Ascending aorta (tissue), 2 donors: ENCODE measurements at regions of chr10 and their contacts with region 1.

Region 1: DNA sequence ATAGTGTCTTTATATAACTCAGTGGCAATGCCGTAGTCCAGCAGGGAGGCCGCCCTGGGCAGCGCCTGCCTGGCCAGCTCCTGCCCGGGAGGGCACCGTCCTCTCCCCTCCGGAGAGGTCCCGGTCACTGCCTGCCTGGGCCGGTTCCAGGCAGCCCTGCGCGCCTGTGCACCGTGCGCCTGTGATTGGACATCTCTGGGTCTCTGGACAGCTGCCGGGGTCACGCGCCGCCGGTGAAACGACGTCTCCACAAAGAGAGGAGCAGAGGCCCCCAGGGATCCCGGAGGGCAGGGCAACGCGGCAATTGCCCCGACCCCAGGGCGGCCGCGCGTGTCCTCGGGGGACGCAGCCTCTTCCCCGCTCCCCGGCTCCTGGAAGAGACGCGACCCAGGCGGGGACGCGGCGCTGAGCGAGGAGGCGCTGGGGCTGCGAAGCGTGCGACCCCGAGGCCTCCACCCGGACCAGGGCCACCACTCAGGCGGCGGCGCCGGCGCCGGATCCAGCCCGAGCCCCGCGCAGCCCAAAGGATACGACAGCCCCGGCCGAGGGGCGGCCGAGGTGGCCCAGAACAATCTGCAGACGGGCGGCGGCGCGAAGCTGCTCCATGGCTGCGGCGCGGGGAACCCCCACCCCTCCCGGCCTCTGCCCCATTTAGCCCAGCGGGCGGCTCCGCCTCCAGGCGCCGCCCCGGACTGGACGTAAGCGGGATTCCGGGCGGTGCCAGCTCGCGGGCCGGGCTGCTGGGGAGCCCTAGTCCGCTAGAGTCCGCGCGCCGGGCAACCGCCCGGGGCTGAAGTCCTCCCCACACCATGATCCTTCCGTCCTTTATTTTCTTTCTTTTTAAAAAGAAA is at the start of gene PHYH:
- DNase-seq: peak; percentile 75 to 95
- H3K4me3 ChIP-seq: peak within 1 kb of the TSS; percentile 77 to 86
- H3K27ac ChIP-seq: peak within 1 kb of the TSS; percentile 99
- H3K4me1 ChIP-seq: peaks cover 11 to 20% of the 10 kb centered on the region in 2 donors
- H3K27me3 ChIP-seq: no peaks in the 10 kb centered on the region
- CTCF ChIP-seq: no peak
- total RNA-seq, gene PHYH: 22.0 TPM

Region 2: GRCh38 chr10:12042797-12043651 is 1256.6 kb before region 1 on chr10 and contains the start of gene UPF2:
- intact Hi-C with region 1: loop called (anchors 2 kb)
- DNase-seq: peak; percentile 95 to 99
- H3K4me3 ChIP-seq: peak within 1 kb of the TSS; percentile 91 to 95
- H3K27ac ChIP-seq: peak within 1 kb of the TSS; percentile 91 to 93
- H3K4me1 ChIP-seq: peaks cover 0 to 2% of the 10 kb centered on the region in 2 donors
- H3K27me3 ChIP-seq: no peaks in the 10 kb centered on the region
- CTCF ChIP-seq: no peak
- total RNA-seq, gene UPF2: 7.9 TPM

Region 3: GRCh38 chr10:13146383-13146782 is 153.3 kb before region 1 on chr10:
- intact Hi-C with region 1: no loop called
- DNase-seq: no peak
- H3K4me3 ChIP-seq: no peak overlapping the region
- H3K27ac ChIP-seq: no peak overlapping the region
- H3K4me1 ChIP-seq: no peaks in the 10 kb centered on the region
- H3K27me3 ChIP-seq: no peaks in the 10 kb centered on the region
- CTCF ChIP-seq: no peak

Region 4: GRCh38 chr10:13160934-13161856 is 138.5 kb before region 1 on chr10 and contains the start of gene MCM10:
- intact Hi-C with region 1: loop called (anchors 1 kb)
- DNase-seq: peak; percentile 92 to 99
- H3K4me3 ChIP-seq: peak within 1 kb of the TSS; percentile 29 to 68
- H3K27ac ChIP-seq: no peak within 1 kb of the TSS
- H3K4me1 ChIP-seq: peaks cover 4 to 10% of the 10 kb centered on the region in 2 donors
- H3K27me3 ChIP-seq: no peaks in the 10 kb centered on the region
- CTCF ChIP-seq: peak; percentile 73 to 90 (median 85)
- total RNA-seq, gene MCM10: 0.11 TPM

Region 5: DNA sequence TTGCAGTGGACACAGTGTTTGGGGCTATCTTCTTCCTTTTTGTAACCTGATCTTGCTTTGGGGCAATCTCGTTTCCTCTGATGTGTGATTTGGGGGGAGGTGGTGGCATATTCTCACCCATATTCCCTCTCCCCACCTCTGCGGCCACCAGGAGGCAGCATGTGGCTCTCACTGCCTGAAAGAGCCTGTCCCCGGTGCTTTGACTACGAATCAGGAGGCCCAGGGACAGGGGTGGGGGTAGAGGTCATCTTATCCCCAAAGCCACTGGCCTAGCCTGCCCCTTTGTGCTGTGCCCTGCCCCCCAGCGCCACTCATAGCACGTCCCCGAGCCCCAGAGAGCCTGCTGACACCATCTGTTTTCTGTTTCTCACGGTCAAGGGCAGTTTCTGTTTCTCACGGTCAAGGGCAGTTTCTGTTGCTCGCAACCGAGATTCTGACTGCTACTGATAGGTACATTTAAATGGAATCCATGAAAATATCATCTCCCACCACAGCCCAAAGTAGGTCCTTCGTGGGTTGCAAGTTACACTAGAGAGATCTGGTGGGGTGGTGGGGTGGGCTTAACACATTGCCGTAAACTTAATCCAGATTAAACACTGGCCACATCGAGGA is 28.0 kb before region 1 on chr10:
- intact Hi-C with region 1: loop called (anchors 2 kb)
- DNase-seq: peak in 1 of 2 donors; percentile 65
- H3K4me3 ChIP-seq: peak overlapping the region in 1 of 2 donors; percentile 33
- H3K27ac ChIP-seq: peak overlapping the region in 1 of 2 donors; percentile 15
- H3K4me1 ChIP-seq: peaks cover 0 to 8% of the 10 kb centered on the region in 2 donors
- H3K27me3 ChIP-seq: no peaks in the 10 kb centered on the region
- CTCF ChIP-seq: peak; percentile 9 to 31 (median 21)

Region 6: GRCh38 chr10:13348216-13349017 is 48.8 kb after region 1 on chr10 and contains the start of gene SEPHS1:
- intact Hi-C with region 1: loop called (anchors 1 kb)
- DNase-seq: peak in 1 of 2 donors; percentile 85
- H3K4me3 ChIP-seq: peak within 1 kb of the TSS; percentile 90 to 93
- H3K27ac ChIP-seq: peak within 1 kb of the TSS; percentile 93 to 96
- H3K4me1 ChIP-seq: peaks cover 0 to 13% of the 10 kb centered on the region in 2 donors
- H3K27me3 ChIP-seq: no peaks in the 10 kb centered on the region
- CTCF ChIP-seq: peak in 2 of 3 experiments; percentile 5 to 10
- total RNA-seq, gene SEPHS1: 20.3 TPM

Region 7: DNA sequence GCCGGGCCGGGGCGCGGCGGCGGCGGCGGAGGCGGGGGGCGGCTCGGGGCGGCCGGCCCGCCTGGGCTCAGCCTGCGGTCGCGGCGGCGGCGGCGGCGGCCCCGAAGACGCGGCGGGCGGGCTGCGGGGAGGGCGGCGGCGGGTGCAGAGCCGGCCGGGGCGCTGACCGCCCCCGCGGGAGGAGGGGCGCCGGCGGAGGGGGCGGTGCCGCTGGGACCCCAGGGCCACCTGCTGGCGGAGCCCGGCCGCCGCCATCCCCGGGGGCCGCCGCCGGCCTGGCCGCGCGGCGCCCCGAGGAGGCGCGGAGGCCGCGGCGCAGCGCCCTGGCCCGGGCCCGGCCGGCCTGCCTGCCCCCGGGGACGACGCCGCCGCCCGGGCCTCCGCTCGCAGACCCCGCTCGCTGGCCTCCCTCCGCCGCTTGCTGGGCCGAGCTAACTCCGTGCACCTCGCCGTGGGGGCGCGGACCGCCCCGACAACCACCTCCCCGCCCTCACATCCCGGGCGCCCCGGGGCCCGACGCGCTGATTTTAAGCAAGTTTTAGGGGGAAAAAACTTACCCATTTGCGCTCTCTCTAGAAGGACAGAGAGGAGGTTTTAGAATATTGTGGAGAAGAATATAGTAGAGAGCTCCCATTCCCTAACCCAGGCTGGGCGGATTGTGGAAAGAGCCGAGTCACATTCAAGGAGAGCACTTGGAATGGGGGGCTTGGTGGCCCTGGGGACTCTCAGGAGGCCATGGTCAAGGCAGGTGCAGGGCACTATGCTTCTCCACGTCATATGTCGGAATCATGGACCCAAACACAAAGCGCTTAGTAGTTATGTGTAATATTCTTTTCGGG is 229.4 kb after region 1 on chr10 and contains the start of gene BEND7:
- intact Hi-C with region 1: loop called (anchors 5 kb)
- DNase-seq: no peak
- H3K4me3 ChIP-seq: peak within 1 kb of the TSS; percentile 66 to 80
- H3K27ac ChIP-seq: peak within 1 kb of the TSS; percentile 65 to 82
- H3K4me1 ChIP-seq: peaks cover 0 to 5% of the 10 kb centered on the region in 2 donors
- H3K27me3 ChIP-seq: no peaks in the 10 kb centered on the region
- CTCF ChIP-seq: no peak
- total RNA-seq, gene BEND7: 6.9 TPM

Region 8: DNA sequence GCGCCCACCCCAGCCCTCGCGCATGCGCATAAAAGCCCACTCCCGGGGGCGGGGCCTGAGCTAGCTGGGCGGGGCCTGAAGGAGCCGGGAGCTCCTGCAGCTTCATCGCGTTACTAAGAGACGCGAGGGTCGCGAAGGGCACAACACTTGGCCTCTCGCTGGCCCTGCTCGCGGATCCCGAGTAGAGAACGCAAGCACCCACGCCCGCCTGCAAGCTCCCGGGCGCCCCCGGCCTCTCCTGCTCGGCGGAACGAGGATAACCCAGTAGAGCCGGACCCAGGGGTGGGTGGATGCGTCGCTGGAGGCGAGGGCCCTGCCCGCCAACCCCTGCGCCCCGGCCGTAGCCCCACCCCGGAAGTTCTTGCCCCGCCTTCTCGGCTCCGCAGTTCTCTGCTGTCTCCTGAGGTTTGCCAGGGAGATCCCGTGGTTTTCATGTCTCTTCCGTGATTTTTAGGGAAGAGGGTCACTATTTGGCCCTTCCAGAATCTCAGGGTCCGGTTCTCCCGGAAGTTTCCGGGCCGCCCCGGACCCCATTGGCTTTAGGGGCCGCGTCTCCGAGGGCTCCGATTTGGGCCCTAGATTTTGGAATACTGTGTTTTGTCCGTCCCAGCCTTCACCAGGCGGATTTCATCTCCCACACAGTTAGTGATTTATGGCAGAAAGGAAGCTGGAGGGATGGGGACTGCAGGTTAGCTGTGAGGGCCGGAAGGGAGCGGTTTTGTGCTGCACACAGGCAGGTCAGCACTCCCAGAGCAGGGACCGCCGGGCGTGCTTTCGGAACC is 1659.8 kb after region 1 on chr10 and contains the start of gene MEIG1:
- intact Hi-C with region 1: loop called (anchors 10 kb)
- DNase-seq: peak; percentile 76 to 97
- H3K4me3 ChIP-seq: peak within 1 kb of the TSS; percentile 76 to 92
- H3K27ac ChIP-seq: peak within 1 kb of the TSS; percentile 92 to 97
- H3K4me1 ChIP-seq: peaks cover 0 to 3% of the 10 kb centered on the region in 2 donors
- H3K27me3 ChIP-seq: no peaks in the 10 kb centered on the region
- CTCF ChIP-seq: no peak
- total RNA-seq, gene MEIG1: not detected